ENCODE measurements at regions of chr17 and their contacts with region 1.

Region 1: DNA sequence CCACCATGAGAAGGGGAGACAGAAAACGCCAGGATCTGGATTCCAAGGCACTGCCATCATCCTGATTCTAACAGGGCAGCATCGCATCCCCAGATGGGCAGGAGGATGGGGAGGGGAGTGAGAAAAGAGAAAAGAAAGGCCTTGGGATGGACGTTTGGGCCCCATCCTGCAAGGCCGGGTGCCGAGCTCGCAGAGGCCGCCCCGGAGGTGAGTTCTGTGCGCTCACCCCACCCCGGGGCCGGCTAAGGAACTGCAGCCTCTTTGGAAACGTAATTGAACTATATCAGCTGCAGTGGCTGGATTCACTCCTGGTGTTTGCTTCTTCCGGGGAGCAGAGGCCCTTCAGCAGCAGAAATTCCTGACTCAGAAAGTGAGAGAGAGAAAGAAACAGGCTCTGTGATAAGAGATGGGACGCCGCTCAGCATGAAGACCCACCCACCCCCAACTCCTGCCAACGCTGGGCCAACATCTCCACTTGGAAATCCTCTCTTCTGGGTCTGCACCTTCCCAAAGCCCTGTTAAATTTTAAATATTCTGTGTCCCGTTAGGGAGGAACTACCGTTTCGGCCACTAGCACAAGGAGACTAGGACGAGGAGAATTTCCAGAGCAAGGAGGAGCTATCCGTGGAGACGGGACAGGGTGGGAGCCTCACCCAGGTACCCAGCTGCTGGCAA is 8.5 kb upstream of the SSTR2 start:
- DNase-seq: peak; percentile 71
- H3K4me3 ChIP-seq: no peak overlapping the region
- H3K27ac ChIP-seq: peak overlapping the region; percentile 28
- H3K4me1 ChIP-seq: peaks cover 17% of the 10 kb centered on the region
- H3K27me3 ChIP-seq: peaks cover 76% of the 10 kb centered on the region
- CTCF ChIP-seq: peak; percentile 81

Region 2: GRCh38 chr17:72725433-72726068 is 430.8 kb before region 1 on chr17:
- intact Hi-C with region 1: loop called (anchors 10 kb)
- DNase-seq: peak; percentile 47
- H3K4me3 ChIP-seq: no peak overlapping the region
- H3K27ac ChIP-seq: no peak overlapping the region
- H3K4me1 ChIP-seq: no peaks in the 10 kb centered on the region
- H3K27me3 ChIP-seq: no peaks in the 10 kb centered on the region
- CTCF ChIP-seq: peak; percentile 88

Region 3: GRCh38 chr17:72985881-72986720 is 170.2 kb before region 1 on chr17:
- intact Hi-C with region 1: loop called (anchors 10 kb)
- DNase-seq: peak; percentile 44
- H3K4me3 ChIP-seq: no peak overlapping the region
- H3K27ac ChIP-seq: no peak overlapping the region
- H3K4me1 ChIP-seq: no peaks in the 10 kb centered on the region
- H3K27me3 ChIP-seq: no peaks in the 10 kb centered on the region
- CTCF ChIP-seq: peak; percentile 86

Region 4: DNA sequence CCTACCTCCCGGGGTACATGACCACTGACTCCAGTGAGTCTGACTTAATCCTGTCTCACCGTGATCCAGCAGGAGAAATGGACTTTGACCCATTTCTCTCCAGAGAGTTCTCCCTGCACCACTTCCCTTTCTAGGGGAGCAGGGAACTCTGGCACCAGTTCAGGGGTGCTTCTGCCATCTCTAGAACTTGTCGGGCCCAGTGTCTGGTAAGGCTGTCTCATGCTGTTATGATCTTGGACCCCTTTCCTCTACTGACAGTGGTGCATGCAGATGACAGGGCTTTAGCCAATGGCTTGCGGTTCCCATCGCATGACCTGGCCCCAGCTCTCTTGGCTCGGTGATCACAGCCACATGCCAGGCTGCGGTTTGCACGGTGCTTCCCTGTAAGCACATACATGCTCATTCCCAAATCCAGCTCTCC is 125.8 kb before region 1 on chr17:
- intact Hi-C with region 1: no loop called
- DNase-seq: no peak
- H3K4me3 ChIP-seq: no peak overlapping the region
- H3K27ac ChIP-seq: no peak overlapping the region
- H3K4me1 ChIP-seq: peaks cover 7% of the 10 kb centered on the region
- H3K27me3 ChIP-seq: no peaks in the 10 kb centered on the region
- CTCF ChIP-seq: no peak